ENCODE measurements at regions of chr15 and their contacts with region 1.

Region 1: DNA sequence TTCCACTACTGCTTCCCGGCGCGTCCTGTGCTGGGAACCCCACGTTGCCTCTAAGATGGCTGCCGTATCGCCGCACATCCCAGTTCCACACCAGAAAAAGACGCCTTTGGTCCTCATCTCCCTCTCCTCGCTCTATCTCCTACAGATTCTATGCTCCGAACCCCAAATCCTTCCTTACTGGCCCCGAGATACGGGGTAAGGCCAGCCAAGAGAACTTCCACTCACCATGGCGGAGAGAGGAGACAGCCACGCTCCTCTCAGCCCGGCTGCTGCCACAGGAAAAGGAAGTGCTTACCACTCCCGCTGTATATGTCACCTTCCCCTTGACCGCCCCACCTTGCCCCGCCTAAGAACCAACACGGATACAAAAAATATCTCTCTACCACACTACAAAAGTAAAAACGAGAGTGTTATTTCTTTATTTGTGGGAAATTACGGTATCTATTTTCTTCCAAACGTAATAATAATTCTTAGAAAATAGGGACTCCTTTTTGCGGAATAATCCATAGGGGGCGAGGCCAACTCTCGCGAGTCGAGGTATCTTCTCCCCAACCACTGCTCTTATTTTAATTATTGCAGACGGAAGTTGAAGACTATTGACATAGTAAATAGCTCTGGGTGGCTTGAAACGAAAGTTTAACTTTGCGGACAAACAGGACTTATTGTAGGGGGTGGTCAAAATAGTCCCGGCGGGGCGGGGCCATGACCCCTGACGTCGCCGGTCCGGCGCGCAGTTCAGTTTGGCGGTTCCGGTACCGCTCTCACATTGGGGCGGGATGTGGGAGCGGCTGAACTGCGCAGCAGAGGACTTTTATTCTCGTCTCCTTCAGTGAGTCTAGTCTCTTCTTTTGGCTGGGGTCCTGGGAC is at the starts of genes RPL4 and ZWILCH:
- DNase-seq: peak; percentile 59 to 84
- H3K4me3 ChIP-seq: peak within 1 kb of the TSS; percentile 100
- H3K27ac ChIP-seq: peak within 1 kb of the TSS; percentile 91
- H3K4me1 ChIP-seq: peaks cover 11% of the 10 kb centered on the region
- H3K27me3 ChIP-seq: no peaks in the 10 kb centered on the region
- CTCF ChIP-seq: no peak
- total RNA-seq, gene RPL4: 1,859 and 2,320 TPM in 2 replicates
- total RNA-seq, gene ZWILCH: 26.3 and 30.3 TPM in 2 replicates

Region 2: DNA sequence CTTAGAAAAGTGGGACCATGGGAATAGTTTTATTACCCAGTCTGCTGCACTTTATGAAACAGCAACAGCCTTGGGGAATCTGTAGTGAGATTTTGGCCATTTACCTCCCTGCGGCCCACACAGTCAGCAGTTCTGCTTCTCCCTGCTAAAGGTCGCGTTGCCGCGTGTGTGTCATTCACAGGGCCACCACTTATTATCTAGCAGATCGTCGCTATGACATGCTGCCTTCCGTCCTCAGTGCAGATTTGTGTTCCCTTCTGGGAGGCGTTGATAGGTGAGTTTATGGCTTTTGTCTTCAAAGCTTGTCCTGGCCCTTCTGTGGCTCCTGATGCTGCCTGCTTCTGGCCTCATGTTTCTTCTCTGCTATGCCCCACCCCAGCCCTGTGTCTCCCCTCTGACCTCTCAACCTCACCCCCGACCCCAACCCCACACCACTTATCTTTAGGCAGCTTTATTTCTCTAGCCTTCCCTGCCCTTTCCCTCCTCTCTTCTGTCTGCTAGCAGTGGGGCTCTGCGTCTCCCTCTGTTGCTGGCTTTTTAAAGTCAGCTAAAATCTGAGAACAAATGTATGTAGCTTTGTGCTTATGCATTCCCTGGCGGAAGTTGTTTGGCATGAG is 181.4 kb before region 1 on chr15:
- CTCF ChIA-PET with region 1: no interaction called
- POLR2A ChIA-PET with region 1: no interaction called
- intact Hi-C with region 1: no loop called
- DNase-seq: no peak
- H3K4me3 ChIP-seq: no peak overlapping the region
- H3K27ac ChIP-seq: no peak overlapping the region
- H3K4me1 ChIP-seq: no peaks in the 10 kb centered on the region
- H3K27me3 ChIP-seq: no peaks in the 10 kb centered on the region
- CTCF ChIP-seq: no peak

Region 3: GRCh38 chr15:66515901-66516322 is 11.1 kb after region 1 on chr15:
- CTCF ChIA-PET with region 1: interaction called, 10 read pairs
- POLR2A ChIA-PET with region 1: interaction called, 8 read pairs
- intact Hi-C with region 1: no loop called
- DNase-seq: peak; percentile 56 to 58
- H3K4me3 ChIP-seq: no peak overlapping the region
- H3K27ac ChIP-seq: peak overlapping the region; percentile 39
- H3K4me1 ChIP-seq: peaks cover 12% of the 10 kb centered on the region
- H3K27me3 ChIP-seq: no peaks in the 10 kb centered on the region
- CTCF ChIP-seq: no peak

Region 4: DNA sequence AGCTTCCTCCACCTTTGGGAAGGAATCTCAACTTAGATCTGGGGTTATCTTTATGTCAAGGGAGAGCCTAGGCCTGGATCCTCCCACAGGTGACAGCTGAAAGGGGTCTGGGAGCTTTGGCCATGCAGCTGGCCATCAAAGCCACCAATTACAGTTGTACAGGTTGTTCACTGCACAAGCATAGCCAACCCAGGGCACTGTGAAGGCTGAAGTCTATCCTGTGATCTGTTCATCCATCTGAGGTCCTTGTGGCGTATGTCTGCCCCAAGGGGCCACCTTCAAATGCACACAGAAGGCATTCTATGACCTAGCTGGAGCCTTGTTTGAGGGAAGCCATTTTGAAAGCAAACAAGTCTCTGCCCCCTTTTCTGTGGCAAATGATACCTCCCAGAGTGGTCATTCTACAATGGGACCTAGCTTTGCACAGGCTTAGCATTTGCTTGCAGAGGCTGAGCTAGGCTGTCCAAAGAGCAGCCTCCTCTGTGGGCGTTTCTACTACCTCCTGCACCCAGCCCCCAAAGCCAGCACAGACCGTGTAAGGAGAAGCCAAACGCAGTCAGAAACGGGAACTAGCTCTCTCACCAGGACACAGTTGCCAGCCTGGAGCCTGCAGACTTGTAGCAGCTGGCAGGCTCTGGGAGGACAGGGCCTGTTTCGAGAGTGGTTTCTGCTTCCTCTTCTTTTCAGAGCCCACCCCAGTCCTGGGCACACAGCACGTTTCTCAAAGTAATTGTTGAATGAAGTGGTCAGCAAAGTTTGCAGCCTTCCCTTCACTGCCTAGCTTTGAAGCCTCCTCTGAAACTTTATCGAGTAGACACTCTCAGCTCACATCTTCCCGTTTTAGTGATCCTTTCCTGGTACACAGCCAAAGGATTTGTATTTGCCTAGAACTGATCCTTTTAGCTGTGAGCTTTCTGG is 403.3 kb after region 1 on chr15:
- CTCF ChIA-PET with region 1: interaction called, 11 read pairs
- POLR2A ChIA-PET with region 1: no interaction called
- intact Hi-C with region 1: no loop called
- DNase-seq: no peak
- H3K4me3 ChIP-seq: no peak overlapping the region
- H3K27ac ChIP-seq: no peak overlapping the region
- H3K4me1 ChIP-seq: no peaks in the 10 kb centered on the region
- H3K27me3 ChIP-seq: no peaks in the 10 kb centered on the region
- CTCF ChIP-seq: no peak

Measured in PC-9 (cell line).